CD4-positive, alpha-beta T cell (primary cell): ENCODE measurements at regions of chr6 and their contacts with region 1.

Region 1: GRCh38 chr6:30611150-30611855 is 5.7 kb downstream of the PPP1R10 start:
- DNase-seq: no peak
- ATAC-seq: no peak
- H3K4me3 ChIP-seq: no peak overlapping the region
- H3K4me3 Mint-ChIP-seq: no peak overlapping the region
- H3K27ac ChIP-seq: peak overlapping the region in 1 of 2 donors; percentile 18
- H3K27ac Mint-ChIP-seq: peak overlapping the region; percentile 99
- H3K4me1 ChIP-seq: peaks cover 45% of the 10 kb centered on the region
- H3K4me1 Mint-ChIP-seq: peaks cover 66% of the 10 kb centered on the region
- H3K27me3 ChIP-seq: no peaks in the 10 kb centered on the region
- H3K27me3 Mint-ChIP-seq: no peaks in the 10 kb centered on the region
- CTCF ChIP-seq: no peak

Region 2: DNA sequence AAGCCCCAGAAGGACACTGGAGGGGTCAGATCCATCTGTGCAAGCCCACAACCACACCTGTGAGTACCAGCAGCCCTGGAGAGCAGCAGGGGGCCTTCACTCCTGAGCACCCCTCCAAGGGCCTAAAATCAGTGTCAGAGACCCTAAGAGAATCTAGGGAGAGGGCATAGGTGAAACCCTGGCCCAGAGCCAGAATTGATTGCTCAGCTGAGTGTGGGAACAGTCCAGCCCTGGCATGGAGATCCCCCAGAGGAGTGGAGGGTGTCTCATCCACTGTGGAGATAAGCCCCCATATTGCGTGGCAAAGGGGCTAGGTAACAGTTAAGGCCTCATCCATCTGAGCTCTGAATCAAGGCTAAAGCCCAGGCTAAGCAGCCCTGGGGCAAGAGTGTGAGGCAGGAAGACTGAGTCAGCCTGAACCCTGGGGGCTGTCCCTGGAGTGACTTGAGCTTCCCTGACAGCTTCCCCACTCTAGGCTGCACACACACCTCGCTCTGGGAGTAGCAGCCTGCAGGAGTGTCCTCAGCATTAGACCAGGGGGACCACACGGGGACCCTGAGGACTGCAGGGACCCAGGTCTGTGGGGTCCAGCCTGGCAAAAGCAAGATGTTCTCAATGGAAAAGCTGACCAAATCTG is 1079.8 kb before region 1 on chr6:
- CTCF ChIA-PET with region 1: no interaction called
- POLR2A ChIA-PET with region 1: no interaction called
- intact Hi-C with region 1: no loop called
- DNase-seq: no peak
- ATAC-seq: no peak
- H3K4me3 ChIP-seq: no peak overlapping the region
- H3K4me3 Mint-ChIP-seq: no peak overlapping the region
- H3K27ac ChIP-seq: no peak overlapping the region
- H3K27ac Mint-ChIP-seq: no peak overlapping the region
- H3K4me1 ChIP-seq: no peaks in the 10 kb centered on the region
- H3K4me1 Mint-ChIP-seq: no peaks in the 10 kb centered on the region
- H3K27me3 ChIP-seq: peaks cover 0 to 3% of the 10 kb centered on the region in 2 experiments
- H3K27me3 Mint-ChIP-seq: peaks cover 17% of the 10 kb centered on the region
- CTCF ChIP-seq: no peak

Region 3: GRCh38 chr6:30600451-30600961 is 10.8 kb before region 1 on chr6:
- CTCF ChIA-PET with region 1: interaction called, 22 read pairs
- POLR2A ChIA-PET with region 1: interaction called, 135 read pairs
- intact Hi-C with region 1: no loop called
- DNase-seq: no peak
- ATAC-seq: no peak
- H3K4me3 ChIP-seq: no peak overlapping the region
- H3K4me3 Mint-ChIP-seq: no peak overlapping the region
- H3K27ac ChIP-seq: peak overlapping the region; percentile 29 to 37
- H3K27ac Mint-ChIP-seq: peak overlapping the region; percentile 58
- H3K4me1 ChIP-seq: peaks cover 14% of the 10 kb centered on the region
- H3K4me1 Mint-ChIP-seq: peaks cover 35% of the 10 kb centered on the region
- H3K27me3 ChIP-seq: no peaks in the 10 kb centered on the region
- H3K27me3 Mint-ChIP-seq: no peaks in the 10 kb centered on the region
- CTCF ChIP-seq: no peak